Uterus (tissue), 4 donors: ENCODE measurements at regions of chr4 and their contacts with region 1.

Region 1: DNA sequence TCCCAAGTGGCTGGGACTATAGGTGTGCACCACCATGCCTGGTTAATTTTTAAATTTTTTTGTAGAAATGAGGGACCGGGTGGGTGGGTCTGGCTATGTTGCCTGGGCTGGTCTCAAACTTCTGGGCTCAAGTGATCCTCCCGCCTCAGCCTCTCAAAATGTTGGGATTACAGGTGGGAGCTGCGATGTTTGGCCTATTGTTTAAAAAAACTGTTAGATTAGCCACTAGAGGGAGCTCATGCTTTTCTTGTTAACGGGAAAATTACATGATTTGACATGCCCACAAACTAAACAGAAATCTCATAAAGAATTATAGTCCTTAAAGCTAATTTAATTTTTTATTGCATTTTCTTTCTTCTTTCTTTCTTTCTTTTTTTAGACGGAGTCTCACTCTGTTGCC is 5.0 kb upstream of the SDAD1 start:
- DNase-seq: no peak
- H3K4me3 ChIP-seq: no peak overlapping the region
- H3K27ac ChIP-seq: no peak overlapping the region
- H3K4me1 ChIP-seq: peaks cover 0 to 3% of the 10 kb centered on the region in 2 donors
- H3K27me3 ChIP-seq: no peaks in the 10 kb centered on the region
- CTCF ChIP-seq: peak; percentile 60 to 69 (median 64)
- POLR2A ChIP-seq: no peak

Region 2: GRCh38 chr4:74223801-74224533 is 1771.8 kb before region 1 on chr4:
- intact Hi-C with region 1: no loop called
- DNase-seq: no peak
- H3K4me3 ChIP-seq: no peak overlapping the region
- H3K27ac ChIP-seq: no peak overlapping the region
- H3K4me1 ChIP-seq: no peaks in the 10 kb centered on the region
- H3K27me3 ChIP-seq: no peaks in the 10 kb centered on the region
- CTCF ChIP-seq: no peak
- POLR2A ChIP-seq: no peak

Region 3: DNA sequence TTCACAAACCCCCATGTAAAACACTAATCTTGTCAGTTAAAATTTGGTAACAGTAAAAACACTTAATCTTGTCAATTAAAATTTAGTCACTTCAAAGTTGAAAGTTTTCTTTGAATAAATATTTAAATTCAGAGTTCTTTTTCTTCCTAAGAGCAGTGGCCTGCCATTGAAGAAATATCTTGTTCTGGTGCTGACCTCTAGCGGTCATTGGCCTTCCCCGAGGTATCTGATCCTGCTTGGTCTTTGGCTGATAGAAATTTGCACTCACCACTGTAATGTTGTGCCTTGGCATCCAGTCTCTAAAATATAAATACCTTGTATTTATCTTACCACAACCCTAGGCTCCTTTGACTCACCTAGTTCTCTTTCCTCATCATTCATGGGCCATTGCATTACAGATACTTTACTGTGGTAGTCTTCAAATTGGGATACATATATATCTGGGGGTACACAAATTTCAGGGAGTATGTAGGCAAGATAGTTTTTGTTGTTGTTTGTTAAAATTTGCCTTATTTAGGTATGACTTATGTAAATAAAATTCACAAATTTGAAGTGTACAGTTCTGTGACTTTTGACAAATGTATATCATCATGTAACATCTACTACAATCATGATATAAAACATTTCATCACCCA is 72.0 kb after region 1 on chr4:
- intact Hi-C with region 1: loop called (anchors 10 kb)
- DNase-seq: peak; percentile 59 to 64
- H3K4me3 ChIP-seq: no peak overlapping the region
- H3K27ac ChIP-seq: no peak overlapping the region
- H3K4me1 ChIP-seq: no peaks in the 10 kb centered on the region
- H3K27me3 ChIP-seq: no peaks in the 10 kb centered on the region
- CTCF ChIP-seq: peak; percentile 57 to 80 (median 64)
- POLR2A ChIP-seq: no peak